CD8-positive, alpha-beta T cell (primary cell): ENCODE measurements at regions of chr15 and their contacts with region 1.

Region 1: GRCh38 chr15:50613600-50613999 is 67.1 kb upstream of the USP50 start:
- DNase-seq: no peak
- ATAC-seq: no peak
- H3K4me3 ChIP-seq: no peak overlapping the region
- H3K4me3 Mint-ChIP-seq: no peak overlapping the region
- H3K27ac ChIP-seq: no peak overlapping the region
- H3K27ac Mint-ChIP-seq: no peak overlapping the region
- H3K4me1 ChIP-seq: no peaks in the 10 kb centered on the region
- H3K4me1 Mint-ChIP-seq: no peaks in the 10 kb centered on the region
- H3K27me3 ChIP-seq: no peaks in the 10 kb centered on the region
- H3K27me3 Mint-ChIP-seq: no peaks in the 10 kb centered on the region
- CTCF ChIP-seq: no peak

Region 2: DNA sequence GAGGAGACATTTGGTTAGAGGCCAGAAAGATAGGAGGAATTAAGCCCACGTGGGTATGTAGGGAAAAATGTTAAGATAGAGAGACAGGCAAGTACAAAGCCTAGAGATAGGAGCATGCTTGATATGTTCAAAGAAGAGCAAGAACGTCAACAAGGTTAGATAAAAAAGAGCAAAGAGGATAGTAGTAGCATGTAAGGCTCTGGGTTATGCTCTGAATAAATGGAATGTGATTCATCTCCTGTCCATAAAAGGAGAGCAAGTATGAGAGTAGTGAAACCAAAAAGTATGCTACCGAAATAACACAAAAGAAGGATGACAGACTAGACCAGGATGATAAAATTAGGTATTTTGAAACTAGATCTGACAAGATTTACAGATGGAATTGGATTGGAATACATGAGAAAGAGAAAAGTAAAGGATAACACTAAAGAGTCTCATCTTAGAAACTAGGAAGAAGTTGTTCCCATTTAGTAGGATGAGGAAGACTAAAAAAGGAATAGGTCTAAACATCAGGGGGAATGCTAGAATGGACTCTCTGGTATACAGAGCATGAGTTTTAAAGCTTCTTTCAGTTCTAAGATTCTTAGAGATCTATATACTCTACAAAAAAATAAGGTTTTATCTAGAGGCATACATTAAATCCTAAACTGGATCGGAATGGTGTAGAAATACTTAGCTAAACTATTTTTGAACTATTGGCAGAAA is 13.9 kb after region 1 on chr15:
- CTCF ChIA-PET with region 1: no interaction called
- POLR2A ChIA-PET with region 1: no interaction called
- intact Hi-C with region 1: loop called in 1 of 2 experiments (anchors 1 kb)
- DNase-seq: no peak
- ATAC-seq: no peak
- H3K4me3 ChIP-seq: no peak overlapping the region
- H3K4me3 Mint-ChIP-seq: no peak overlapping the region
- H3K27ac ChIP-seq: no peak overlapping the region
- H3K27ac Mint-ChIP-seq: no peak overlapping the region
- H3K4me1 ChIP-seq: no peaks in the 10 kb centered on the region
- H3K4me1 Mint-ChIP-seq: no peaks in the 10 kb centered on the region
- H3K27me3 ChIP-seq: no peaks in the 10 kb centered on the region
- H3K27me3 Mint-ChIP-seq: no peaks in the 10 kb centered on the region
- CTCF ChIP-seq: no peak